ENCODE measurements at regions of chr2 and their contacts with region 1.

Region 1: DNA sequence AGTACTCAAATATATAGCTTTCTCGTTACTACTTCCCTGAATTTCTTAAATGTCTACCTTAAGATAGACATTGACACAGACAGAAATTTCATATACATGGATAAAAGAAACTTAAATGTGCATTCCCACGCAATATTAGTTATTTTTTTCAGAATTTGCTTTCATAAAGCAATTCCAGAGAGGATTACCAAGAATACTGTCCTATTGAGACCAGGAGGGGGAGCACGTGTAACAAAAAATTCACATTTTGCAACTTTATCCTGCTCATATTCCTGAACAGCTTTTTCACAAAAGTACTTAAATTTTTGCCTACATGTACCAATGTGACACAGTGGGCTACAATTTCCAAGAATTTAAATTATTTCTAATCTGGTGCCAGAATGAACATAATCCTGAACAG is 30.7 kb upstream of the ERCC3 start:
- DNase-seq: peak; percentile 8
- H3K4me3 ChIP-seq: no peak overlapping the region
- H3K27ac ChIP-seq: no peak overlapping the region
- H3K4me1 ChIP-seq: no peaks in the 10 kb centered on the region
- H3K27me3 ChIP-seq: no peaks in the 10 kb centered on the region
- CTCF ChIP-seq: peak; percentile 46 to 57

Region 2: GRCh38 chr2:127064642-127065250 is 259.9 kb before region 1 on chr2:
- CTCF ChIA-PET with region 1: no interaction called
- dilution Hi-C with region 1: no loop called
- in situ Hi-C with region 1: no loop called
- intact Hi-C with region 1: no loop called
- DNase-seq: peak; percentile 97
- H3K4me3 ChIP-seq: no peak overlapping the region
- H3K27ac ChIP-seq: peak overlapping the region; percentile 69
- H3K4me1 ChIP-seq: peaks cover 26% of the 10 kb centered on the region
- H3K27me3 ChIP-seq: no peaks in the 10 kb centered on the region
- CTCF ChIP-seq: peak; percentile 22 to 43

Region 3: DNA sequence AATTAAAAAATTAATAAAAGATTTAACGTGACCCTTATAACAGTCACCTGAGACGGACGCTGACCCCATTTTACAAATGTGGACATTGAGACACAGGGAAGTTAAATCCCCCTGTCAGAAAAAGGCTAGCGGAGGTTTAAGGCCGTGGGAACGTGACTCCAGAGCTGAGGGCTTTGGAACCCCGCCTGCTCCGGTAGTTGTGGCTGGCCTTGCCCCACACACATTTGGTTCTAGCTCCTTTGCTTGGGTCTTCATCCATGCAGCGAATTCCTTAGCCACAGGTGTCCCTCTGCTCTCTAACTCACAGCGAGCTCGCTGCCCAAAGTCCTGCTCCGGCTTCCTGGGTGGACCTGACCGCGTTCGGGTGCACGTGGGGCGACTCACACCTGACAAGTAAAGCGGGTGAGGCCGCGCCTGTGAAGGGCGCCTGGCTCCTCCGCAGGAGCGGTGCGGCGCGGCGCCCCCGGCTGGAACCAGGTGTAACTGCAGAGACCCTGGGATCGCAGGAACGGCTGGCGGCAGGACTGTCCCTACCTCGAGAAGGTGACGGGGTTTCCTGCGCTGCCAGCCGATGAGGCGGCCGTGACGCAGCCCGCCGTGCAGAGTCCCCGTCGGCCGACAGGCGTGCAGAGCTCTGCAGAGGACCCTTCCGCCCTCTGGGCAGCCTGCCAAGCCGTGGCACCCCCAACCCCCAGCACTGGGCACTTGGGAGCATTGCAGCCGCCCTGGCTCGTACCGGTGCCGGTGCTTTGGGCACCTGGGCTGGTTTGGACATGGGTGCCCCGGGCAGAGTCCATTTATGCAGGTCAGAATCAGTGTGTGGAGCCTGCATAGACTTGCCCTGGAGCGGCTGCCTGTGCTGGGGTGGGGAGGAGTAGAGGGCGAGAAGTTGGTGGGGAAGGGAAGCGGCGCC is 91.2 kb after region 1 on chr2:
- CTCF ChIA-PET with region 1: no interaction called
- dilution Hi-C with region 1: no loop called
- in situ Hi-C with region 1: no loop called
- intact Hi-C with region 1: loop called (anchors 1 kb)
- DNase-seq: peak; percentile 72
- H3K4me3 ChIP-seq: peak overlapping the region; percentile 26 to 45 (median 43)
- H3K27ac ChIP-seq: peak overlapping the region; percentile 10
- H3K4me1 ChIP-seq: peaks cover 47% of the 10 kb centered on the region
- H3K27me3 ChIP-seq: no peaks in the 10 kb centered on the region
- CTCF ChIP-seq: peak; percentile 45 to 77

Region 4: DNA sequence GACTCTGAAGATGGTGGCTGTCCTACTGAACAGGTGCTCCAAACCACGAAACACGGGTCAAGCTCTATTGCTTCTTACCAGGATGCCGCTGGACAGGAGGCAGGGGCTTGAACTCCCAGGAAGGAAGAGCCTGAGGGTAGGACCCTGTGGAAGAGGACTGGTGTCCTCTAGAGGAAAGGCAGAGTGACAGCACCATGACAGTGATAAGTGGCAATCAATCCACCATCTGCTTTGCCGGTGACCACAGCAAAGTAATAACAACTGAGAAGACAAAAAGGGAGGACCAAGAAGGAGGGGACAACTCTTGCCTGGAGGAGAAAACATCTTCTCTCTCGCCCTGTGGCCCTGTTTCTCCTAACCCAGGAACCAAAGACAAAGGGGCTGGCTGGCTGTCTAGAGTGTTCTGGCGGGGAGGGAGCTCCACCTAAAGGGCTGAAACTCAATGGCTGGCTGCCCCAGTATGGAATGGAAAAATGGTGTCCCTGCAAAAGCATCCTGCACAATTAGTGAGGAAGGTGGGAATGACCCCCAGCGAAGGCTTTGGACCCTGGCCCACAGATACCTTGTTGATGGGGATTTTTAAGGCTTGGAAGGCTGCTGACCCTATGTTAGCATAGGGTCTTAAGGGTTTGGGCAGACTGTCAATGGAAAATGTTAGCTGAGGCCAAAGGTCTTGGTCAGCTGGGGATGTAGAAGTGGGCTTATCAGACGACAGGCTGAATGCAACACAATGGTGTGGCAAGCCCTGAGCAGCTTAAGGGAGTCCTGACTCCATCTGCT is 128.9 kb after region 1 on chr2:
- CTCF ChIA-PET with region 1: no interaction called
- dilution Hi-C with region 1: no loop called
- in situ Hi-C with region 1: loop called in 1 of 2 experiments (anchors 25 kb)
- intact Hi-C with region 1: no loop called
- DNase-seq: no peak
- H3K4me3 ChIP-seq: no peak overlapping the region
- H3K27ac ChIP-seq: no peak overlapping the region
- H3K4me1 ChIP-seq: no peaks in the 10 kb centered on the region
- H3K27me3 ChIP-seq: no peaks in the 10 kb centered on the region
- CTCF ChIP-seq: peak; percentile 18 to 35

Region 5: DNA sequence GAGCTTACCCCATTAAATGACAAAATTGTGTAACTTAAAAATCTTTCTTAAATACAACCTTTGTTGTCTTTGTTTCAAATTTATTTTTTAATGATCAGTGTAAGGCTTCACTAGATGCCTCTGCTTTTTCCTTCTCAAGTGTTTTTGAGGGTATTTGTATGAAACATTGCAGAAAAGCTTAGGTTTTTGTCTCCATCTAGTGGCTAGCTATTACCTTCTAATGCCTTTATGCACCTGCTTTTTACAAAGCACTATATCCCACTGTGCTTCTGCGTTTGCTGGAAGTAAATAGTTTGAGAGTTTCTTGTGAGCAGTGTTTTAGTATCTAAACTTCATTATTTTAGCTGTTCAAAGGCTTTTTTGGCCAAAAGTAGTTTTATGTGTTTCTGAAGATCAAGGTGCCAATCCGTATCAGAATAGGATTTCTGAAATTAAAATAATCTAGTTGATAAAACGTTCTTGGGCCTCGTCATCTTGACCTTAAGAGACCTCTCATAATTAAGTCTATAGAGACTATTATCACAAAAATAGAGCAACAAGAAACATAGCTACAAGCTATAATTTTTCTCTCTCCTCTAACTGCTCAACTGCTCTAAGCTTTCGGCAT is 154.7 kb after region 1 on chr2:
- CTCF ChIA-PET with region 1: interaction called, 3 read pairs
- dilution Hi-C with region 1: no loop called
- in situ Hi-C with region 1: loop called (anchors 10 to 25 kb)
- intact Hi-C with region 1: loop called (anchors 1 kb)
- DNase-seq: peak; percentile 12
- H3K4me3 ChIP-seq: no peak overlapping the region
- H3K27ac ChIP-seq: no peak overlapping the region
- H3K4me1 ChIP-seq: no peaks in the 10 kb centered on the region
- H3K27me3 ChIP-seq: no peaks in the 10 kb centered on the region
- CTCF ChIP-seq: peak; percentile 68 to 71

Region 6: GRCh38 chr2:127649684-127650040 is 325.0 kb after region 1 on chr2:
- CTCF ChIA-PET with region 1: no interaction called
- dilution Hi-C with region 1: no loop called
- in situ Hi-C with region 1: no loop called
- intact Hi-C with region 1: loop called (anchors 1 kb)
- DNase-seq: peak; percentile 64
- H3K4me3 ChIP-seq: no peak overlapping the region
- H3K27ac ChIP-seq: no peak overlapping the region
- H3K4me1 ChIP-seq: peaks cover 4% of the 10 kb centered on the region
- H3K27me3 ChIP-seq: no peaks in the 10 kb centered on the region
- CTCF ChIP-seq: peak; percentile 82 to 90

Measured in mammary epithelial cell (primary cell).